Right cardiac atrium (tissue), 5 donors: ENCODE measurements at regions of chr9 and their contacts with region 1.

Region 1: DNA sequence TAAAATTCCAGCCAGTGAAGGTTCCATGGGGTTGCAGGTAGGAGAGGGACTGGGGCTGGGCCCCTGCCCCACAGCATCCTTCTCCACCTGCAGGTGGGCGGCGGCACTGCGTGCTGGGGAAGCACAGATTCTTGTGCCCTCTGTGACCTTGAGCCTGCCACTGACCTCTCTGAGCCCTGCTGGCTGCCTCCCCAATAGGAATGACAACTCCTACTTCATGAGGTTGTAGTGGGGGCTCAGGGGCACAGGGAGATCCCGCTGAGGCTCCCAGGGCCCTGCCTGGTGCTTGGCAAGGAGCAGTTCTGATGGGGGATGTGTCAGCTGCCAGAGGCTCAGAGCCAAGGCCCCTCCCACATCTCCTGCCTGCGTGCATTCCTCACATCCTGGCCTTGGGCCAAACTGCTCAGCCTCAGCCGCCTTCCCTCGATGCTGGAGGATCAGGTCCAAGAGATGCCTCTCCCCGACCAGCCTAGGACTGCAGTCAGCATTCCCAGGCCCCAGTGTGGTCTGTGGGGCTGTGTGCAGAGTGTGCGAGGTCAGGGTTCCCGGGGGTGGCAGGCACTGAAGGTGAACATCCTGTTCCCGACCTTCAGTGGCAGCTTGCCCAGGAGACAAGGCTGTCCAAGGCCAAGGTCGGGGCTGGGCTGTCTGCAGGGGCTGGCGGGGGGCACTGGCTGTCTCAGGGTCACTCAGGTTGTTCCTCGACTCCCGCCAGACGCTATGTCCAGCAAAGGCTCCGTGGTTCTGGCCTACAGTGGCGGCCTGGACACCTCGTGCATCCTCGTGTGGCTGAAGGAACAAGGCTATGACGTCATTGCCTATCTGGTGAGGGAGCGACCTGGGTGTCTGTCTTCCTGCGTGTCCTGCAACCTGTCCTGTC is 7.0 kb downstream of the ASS1 start:
- DNase-seq: peak; percentile 92 to 95 (median 94)
- ATAC-seq: peak; percentile 78 to 82
- H3K4me3 ChIP-seq: no peak overlapping the region
- H3K27ac ChIP-seq: peak overlapping the region; percentile 77
- H3K4me1 ChIP-seq: peaks cover 32% of the 10 kb centered on the region
- H3K27me3 ChIP-seq: no peaks in the 10 kb centered on the region

Region 2: GRCh38 chr9:130518943-130519799 is 67.4 kb after region 1 on chr9:
- intact Hi-C with region 1: no loop called
- DNase-seq: peak in 1 of 3 donors; percentile 66
- ATAC-seq: peak; percentile 20 to 35
- H3K4me3 ChIP-seq: no peak overlapping the region
- H3K27ac ChIP-seq: no peak overlapping the region
- H3K4me1 ChIP-seq: no peaks in the 10 kb centered on the region
- H3K27me3 ChIP-seq: no peaks in the 10 kb centered on the region

Region 3: DNA sequence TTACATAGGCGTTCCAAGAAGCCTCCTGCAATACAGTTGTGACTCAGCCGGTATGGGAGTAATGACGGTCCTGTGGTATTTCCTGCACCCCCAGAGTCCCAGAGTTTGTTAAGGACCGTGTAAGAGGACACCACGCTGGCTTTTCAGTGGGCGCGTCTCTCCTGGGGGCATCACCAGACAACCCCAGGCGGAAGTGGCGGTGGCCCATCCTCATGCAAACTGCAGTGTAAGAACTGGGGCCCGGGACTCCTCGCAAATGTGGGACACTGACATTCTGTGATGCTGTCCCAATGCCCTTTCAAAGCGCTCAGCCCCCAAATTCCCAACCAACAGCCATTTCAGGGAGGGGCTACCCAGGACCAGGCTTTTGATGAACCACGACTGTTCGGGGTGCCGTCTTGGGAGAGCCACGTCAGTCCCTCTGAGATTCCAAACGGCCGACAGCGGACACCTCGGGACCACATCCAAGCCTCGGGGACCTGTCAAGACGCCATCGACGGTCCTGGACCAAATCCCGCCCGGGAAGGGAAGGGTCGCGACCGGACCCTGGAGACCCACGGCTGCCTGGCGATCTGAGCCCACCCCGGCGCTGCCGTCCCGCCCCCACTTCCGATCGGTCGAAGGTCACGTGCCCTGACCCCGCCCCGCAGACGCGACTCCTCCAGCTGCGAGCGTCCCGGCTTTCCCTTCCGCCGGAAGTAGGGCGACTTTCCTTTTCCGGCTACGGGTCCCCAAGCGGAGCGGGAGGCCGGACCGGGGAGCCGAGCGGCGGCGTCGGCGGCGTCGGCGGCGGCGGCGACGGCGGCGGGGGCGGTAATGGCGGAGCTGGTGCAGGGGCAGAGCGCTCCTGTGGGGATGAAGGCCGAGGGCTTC is 127.4 kb after region 1 on chr9 and contains the start of gene FUBP3:
- intact Hi-C with region 1: loop called in 1 of 4 experiments (anchors 10 kb)
- DNase-seq: peak; percentile 96 to 98 (median 97)
- ATAC-seq: peak; percentile 97
- H3K4me3 ChIP-seq: peak within 1 kb of the TSS; percentile 75
- H3K27ac ChIP-seq: peak within 1 kb of the TSS; percentile 83
- H3K4me1 ChIP-seq: peaks cover 10% of the 10 kb centered on the region
- H3K27me3 ChIP-seq: no peaks in the 10 kb centered on the region
- total RNA-seq, gene FUBP3: 26.5 to 36.9 (median 33.3) TPM